ENCODE measurements at regions of chr11 and their contacts with region 1.

Region 1: DNA sequence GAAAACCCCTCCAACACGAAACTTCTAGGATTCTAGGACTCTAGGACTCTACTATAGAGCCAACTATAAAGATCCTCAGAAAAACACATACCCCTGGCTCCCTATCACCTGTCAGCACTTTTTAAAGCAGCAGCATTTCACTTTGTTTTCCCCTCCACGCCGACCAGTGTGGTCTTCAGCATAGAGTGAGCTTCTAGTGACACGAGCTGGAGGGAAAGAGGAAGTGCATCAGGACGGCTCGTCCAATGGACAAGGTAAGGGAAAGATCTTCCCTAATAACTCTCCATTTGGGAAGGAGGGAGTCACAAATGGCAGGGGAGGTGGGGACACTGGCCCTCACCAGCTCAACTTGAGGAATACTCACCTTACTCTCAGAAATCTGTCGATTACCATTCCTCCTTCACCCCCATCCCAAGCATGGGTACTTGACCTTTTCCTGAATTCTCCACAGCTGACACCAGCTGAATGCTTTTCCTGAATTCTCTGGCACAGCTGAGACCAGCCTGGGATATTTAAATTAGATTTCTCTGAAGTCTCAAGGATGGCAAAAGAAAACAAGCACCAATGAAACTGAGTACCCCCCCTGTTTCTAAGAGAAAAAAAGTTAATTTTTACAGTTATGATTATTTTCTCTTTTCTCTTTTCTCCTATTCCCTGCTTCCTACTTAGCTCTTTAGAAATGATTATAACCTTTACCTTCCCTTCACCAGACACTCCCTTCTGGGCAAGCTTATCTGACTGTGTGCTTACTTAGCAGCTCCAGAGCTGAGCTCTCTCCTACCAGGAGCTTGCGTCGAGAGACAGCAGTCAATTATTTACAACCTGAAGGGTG is 33.3 kb upstream of the NNMT start:
- DNase-seq: peak; percentile 34
- ATAC-seq: peak; percentile 74
- H3K4me3 Mint-ChIP-seq: no peak overlapping the region
- H3K27ac Mint-ChIP-seq: no peak overlapping the region
- H3K4me1 Mint-ChIP-seq: no peaks in the 10 kb centered on the region
- H3K27me3 Mint-ChIP-seq: no peaks in the 10 kb centered on the region
- CTCF ChIP-seq: no peak

Region 2: DNA sequence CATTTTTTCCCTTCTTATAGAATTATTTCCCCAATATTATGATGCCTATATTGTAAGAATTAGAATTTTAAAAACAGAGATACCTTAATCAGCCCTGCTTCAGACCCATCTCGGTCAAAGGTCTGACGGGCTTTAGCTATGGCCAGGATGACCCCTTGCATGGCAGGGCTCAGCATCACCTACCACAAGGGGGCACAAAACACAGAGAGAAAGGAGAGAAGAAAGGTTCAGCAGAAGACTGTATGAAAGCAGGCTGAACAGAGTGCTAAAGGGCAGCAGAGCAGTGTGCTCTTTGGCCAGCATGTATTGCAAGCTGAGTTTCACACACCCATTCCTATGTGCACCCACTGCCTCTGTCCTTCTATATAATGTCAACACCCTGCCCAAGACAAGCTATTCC is 456.5 kb before region 1 on chr11:
- CTCF ChIA-PET with region 1: interaction called, 12 read pairs
- POLR2A ChIA-PET with region 1: no interaction called
- DNase-seq: peak; percentile 68
- ATAC-seq: peak; percentile 99
- H3K4me3 Mint-ChIP-seq: no peak overlapping the region
- H3K27ac Mint-ChIP-seq: no peak overlapping the region
- H3K4me1 Mint-ChIP-seq: no peaks in the 10 kb centered on the region
- H3K27me3 Mint-ChIP-seq: no peaks in the 10 kb centered on the region
- CTCF ChIP-seq: peak; percentile 35; the same call in 1 of the 2 replicates

Region 3: GRCh38 chr11:113994077-113994954 is 268.6 kb before region 1 on chr11:
- CTCF ChIA-PET with region 1: interaction called, 151 read pairs
- POLR2A ChIA-PET with region 1: interaction called, 4 read pairs
- DNase-seq: peak; percentile 73
- ATAC-seq: peak; percentile 68
- H3K4me3 Mint-ChIP-seq: no peak overlapping the region
- H3K27ac Mint-ChIP-seq: no peak overlapping the region; the same call in 1 of the 2 replicates
- H3K4me1 Mint-ChIP-seq: peaks cover 21% of the 10 kb centered on the region
- H3K27me3 Mint-ChIP-seq: no peaks in the 10 kb centered on the region
- CTCF ChIP-seq: peak; percentile 83

Region 4: GRCh38 chr11:114036156-114036811 is 226.6 kb before region 1 on chr11:
- CTCF ChIA-PET with region 1: interaction called, 102 read pairs
- POLR2A ChIA-PET with region 1: no interaction called
- DNase-seq: peak; percentile 90
- ATAC-seq: peak; percentile 95
- H3K4me3 Mint-ChIP-seq: peak overlapping the region; percentile 50
- H3K27ac Mint-ChIP-seq: no peak overlapping the region
- H3K4me1 Mint-ChIP-seq: no peaks in the 10 kb centered on the region
- H3K27me3 Mint-ChIP-seq: no peaks in the 10 kb centered on the region
- CTCF ChIP-seq: peak; percentile 62

Region 5: GRCh38 chr11:114233755-114234154 is 29.1 kb before region 1 on chr11:
- CTCF ChIA-PET with region 1: interaction called, 10 read pairs
- POLR2A ChIA-PET with region 1: no interaction called
- DNase-seq: no peak
- ATAC-seq: no peak
- H3K4me3 Mint-ChIP-seq: no peak overlapping the region
- H3K27ac Mint-ChIP-seq: no peak overlapping the region
- H3K4me1 Mint-ChIP-seq: peaks cover 27% of the 10 kb centered on the region
- H3K27me3 Mint-ChIP-seq: peaks cover 12% of the 10 kb centered on the region; the same call in 1 of the 2 replicates
- CTCF ChIP-seq: no peak

Region 6: DNA sequence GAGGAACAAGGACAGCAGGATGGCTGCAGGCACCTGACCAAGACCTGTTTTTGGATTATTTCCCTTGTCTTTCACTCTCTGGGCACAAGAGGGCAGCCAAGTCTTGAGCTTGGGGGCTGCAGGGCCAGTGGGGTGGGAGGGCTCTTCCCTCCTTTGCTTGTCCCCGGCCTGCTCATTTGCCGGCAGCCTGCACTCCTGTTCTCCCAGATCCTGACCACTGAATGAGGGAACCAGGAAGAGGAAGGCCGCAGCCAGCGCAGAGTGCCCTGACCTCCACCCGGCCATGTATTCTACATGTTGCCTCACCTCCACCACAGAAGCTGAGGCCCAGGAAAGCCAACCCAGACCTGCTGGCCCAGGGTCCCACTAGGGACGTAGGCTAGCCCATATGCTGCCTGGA is 17.8 kb after region 1 on chr11:
- CTCF ChIA-PET with region 1: interaction called, 12 read pairs
- POLR2A ChIA-PET with region 1: no interaction called
- DNase-seq: peak; percentile 77
- ATAC-seq: peak; percentile 98
- H3K4me3 Mint-ChIP-seq: no peak overlapping the region
- H3K27ac Mint-ChIP-seq: no peak overlapping the region
- H3K4me1 Mint-ChIP-seq: peaks cover 9% of the 10 kb centered on the region; the same call in 1 of the 2 replicates
- H3K27me3 Mint-ChIP-seq: no peaks in the 10 kb centered on the region; the same call in 1 of the 2 replicates
- CTCF ChIP-seq: peak; percentile 42; the same call in 1 of the 2 replicates

Region 7: GRCh38 chr11:114296605-114297372 is 33.9 kb after region 1 on chr11:
- CTCF ChIA-PET with region 1: no interaction called
- POLR2A ChIA-PET with region 1: no interaction called
- DNase-seq: no peak
- ATAC-seq: no peak
- H3K4me3 Mint-ChIP-seq: no peak overlapping the region
- H3K27ac Mint-ChIP-seq: no peak overlapping the region
- H3K4me1 Mint-ChIP-seq: no peaks in the 10 kb centered on the region
- H3K27me3 Mint-ChIP-seq: no peaks in the 10 kb centered on the region
- CTCF ChIP-seq: no peak